ENCODE measurements at regions of chr13 and their contacts with region 1.

Region 1: GRCh38 chr13:93169980-93170379 is 56.6 kb upstream of the GPC6 start:
- DNase-seq: no peak

Region 2: DNA sequence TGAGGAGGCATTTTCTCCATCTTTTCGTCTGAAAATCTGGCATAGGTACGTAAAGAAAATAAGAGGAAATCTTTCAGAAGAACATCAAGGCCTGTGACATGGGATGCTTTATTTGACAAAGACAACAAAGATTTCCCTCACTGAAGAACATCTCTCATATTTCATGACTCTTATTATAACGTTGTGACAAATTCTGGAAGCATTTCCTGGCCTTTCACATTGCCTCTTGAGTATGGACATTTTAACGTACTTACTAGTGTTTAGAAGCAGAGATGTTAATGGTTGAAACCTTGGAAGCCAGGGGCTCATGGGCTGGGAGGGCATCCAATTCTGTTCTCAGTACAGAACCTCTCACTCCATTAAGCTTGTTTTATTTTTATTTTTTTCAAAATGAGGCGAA is 1098.7 kb after region 1 on chr13:
- intact Hi-C with region 1: loop called in 1 of 2 experiments (anchors 10 kb)
- DNase-seq: no peak